Right ventricle myocardium inferior (tissue), 1 donor: ENCODE measurements at regions of chr14 and their contacts with region 1.

Region 1: DNA sequence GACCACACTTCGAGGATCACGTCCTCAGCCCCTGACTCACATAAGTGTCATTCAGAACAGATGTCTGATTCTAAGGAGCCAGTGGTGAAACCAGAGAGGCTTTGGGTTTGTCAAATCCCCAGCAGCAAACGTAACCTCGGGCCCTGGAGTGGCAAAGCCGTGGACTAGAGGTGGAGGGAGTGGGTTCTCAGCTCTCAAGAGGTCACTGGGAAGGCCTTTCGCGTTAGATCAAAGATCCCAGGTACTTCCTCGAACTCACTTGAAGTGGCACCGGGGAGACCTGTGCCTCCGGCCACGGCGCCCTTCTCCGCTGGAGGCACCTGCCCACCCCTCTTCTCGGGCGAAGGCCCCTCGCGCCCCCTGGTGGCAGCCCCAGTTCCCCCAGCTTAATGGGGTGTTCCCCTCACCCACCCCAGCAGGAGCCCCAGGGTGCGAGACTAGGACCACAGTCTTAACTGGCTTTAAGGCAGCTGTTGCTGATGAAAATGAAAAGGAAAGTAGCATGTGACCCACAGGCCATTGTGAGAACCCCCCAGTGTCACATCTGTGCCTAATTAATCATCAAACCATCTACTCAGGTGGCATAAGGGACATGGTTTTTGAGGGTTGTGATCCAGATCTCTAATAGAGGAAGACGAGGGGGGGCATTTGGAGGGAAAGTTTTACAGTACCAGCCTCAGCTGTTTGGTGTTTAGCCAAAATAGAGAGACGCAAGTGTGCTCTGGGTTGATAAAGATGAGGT is 672 bp upstream of the ESR2 start:
- DNase-seq: peak; percentile 75
- ATAC-seq: peak; percentile 89

Region 2: GRCh38 chr14:64117671-64118402 is 177.0 kb before region 1 on chr14:
- intact Hi-C with region 1: loop called (anchors 5 kb)
- DNase-seq: peak; percentile 73
- ATAC-seq: peak; percentile 94

Region 3: DNA sequence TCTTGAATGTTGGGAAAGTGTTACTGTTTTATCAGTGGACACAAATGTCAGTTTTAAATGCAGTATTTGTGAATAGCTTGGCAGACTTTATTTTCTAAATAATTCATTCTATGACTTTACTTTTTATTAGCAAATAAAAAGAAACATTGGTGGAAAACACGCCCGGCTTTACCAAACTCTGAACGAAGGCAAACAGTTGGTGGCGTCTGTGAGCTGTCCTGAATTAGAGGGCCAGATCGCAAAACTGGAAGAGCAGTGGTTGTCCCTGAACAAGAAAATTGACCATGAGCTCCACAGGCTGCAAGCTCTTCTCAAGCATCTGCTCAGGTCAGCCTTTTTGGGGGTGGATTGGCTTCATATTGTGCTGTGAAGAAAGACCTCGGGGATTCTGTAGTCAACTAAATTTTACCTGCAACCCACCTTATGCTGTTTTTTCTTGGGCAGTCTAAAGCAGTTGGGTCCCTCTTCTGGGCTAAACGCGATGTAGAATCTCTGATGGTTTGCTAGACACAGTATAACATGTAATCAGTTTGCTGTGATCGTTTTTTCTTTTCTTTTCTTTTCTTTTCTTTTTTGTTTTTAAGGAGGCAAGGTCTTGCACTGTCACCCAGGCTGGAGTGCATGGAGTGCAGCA is 157.1 kb before region 1 on chr14:
- intact Hi-C with region 1: loop called (anchors 5 kb)
- DNase-seq: no peak
- ATAC-seq: no peak

Region 4: DNA sequence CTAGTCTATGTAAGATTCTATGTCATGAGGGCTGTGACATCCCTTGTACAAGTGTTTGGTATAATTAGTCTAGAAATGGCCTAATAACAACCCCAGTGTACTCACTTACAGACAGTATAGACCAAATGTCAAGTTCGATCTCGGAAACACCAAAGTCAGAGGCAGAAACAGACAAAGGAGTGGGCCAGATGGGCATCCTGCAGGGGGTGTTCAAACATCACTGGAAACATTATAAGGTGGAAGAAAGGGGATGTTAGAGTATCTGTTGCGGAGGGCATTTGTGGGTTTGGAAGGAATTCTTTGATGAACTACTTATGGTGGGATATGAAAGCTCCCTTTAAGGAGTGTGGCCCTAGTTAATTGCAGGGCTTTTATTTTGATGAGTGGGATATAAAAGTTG is 135.3 kb before region 1 on chr14:
- intact Hi-C with region 1: loop called (anchors 2 kb)
- DNase-seq: no peak
- ATAC-seq: no peak

Region 5: DNA sequence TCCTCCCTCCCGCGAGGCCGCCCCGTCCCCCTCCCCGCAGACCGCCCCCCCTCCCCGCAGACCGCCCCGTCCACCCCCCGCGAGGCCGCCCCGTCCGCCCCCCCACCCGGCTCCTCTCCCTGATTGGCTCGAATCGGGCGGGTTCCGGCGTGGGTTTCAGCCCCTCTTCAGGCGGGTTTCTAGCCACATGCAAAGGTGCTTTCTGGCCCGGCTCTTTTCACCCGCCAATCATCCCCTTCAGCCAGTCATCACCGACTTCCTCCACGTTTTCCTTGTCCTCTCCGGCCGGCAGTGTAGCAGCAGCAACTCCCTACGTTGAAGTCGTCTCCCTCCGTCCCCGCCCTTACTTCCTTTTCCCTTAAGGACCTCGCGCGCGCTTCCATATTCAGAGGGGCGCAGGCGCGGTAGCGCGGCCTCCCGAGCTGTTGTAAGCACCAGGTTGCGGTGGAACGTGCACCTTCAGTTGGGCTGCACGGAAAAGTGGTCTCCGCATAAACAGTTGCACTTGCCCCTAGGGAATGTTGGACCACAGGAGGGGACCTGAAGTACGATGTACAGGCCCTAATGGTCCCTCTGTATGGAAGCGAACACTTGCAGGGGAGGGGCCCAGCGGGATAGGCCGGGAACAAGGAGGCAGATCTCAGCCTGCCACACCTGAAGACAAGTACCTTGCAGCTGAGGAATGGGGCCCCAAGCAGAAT is 43.9 kb after region 1 on chr14:
- intact Hi-C with region 1: no loop called
- DNase-seq: peak; percentile 95
- ATAC-seq: peak; percentile 95